Thyroid gland (tissue), 4 donors: ENCODE measurements at regions of chr13 and their contacts with region 1.

Region 1: DNA sequence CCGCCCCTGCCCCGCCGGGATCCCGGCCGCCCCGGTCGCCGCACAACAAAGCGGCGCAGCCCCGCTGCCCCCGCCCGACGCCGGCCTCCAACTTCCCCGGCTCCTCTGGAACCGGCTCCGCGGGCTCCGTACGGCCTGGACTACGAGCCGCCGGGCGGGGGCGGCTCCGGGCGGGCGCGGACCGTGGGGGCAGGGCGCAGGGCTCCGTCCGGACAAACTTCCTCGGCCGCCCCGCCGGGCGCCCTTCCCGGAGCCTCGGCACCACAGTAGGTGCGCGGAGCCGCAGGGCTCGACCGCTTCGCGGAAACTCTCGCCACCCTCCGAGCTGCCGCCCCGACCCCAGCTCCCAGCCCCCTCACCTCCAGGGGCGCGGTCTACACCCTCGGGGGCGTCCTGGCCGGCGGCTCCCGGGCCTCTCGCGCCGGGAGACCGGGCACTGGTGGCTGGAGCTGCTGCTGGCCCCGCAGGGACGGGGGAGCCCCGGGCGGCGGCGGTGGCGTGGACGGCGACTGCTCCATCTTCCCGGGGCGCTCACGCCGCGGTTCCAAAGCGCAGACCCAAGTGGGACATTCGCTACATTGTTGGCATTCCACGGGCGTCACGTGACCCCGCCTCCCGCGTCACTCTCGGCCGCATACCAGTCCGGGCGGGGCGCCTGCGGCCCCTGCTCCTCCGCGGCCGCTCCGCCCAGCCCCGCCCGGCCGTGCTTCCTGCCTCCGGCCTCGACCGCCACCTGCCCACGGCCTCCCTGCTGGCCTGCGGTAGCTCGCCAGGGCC is at the start of gene LATS2:
- DNase-seq: peak; percentile 97 to 98
- H3K4me3 ChIP-seq: peak within 1 kb of the TSS; percentile 75 to 98 (median 93)
- H3K27ac ChIP-seq: peak within 1 kb of the TSS; percentile 100
- H3K4me1 ChIP-seq: peaks cover 31 to 37% of the 10 kb centered on the region in 2 donors
- H3K27me3 ChIP-seq: no peaks in the 10 kb centered on the region
- CTCF ChIP-seq: peak in 3 of 6 experiments; percentile 41 to 65 (median 43)
- POLR2A ChIP-seq: peak; percentile 89 to 98
- total RNA-seq, gene LATS2: 33.0 to 69.6 (median 37.5) TPM

Region 2: DNA sequence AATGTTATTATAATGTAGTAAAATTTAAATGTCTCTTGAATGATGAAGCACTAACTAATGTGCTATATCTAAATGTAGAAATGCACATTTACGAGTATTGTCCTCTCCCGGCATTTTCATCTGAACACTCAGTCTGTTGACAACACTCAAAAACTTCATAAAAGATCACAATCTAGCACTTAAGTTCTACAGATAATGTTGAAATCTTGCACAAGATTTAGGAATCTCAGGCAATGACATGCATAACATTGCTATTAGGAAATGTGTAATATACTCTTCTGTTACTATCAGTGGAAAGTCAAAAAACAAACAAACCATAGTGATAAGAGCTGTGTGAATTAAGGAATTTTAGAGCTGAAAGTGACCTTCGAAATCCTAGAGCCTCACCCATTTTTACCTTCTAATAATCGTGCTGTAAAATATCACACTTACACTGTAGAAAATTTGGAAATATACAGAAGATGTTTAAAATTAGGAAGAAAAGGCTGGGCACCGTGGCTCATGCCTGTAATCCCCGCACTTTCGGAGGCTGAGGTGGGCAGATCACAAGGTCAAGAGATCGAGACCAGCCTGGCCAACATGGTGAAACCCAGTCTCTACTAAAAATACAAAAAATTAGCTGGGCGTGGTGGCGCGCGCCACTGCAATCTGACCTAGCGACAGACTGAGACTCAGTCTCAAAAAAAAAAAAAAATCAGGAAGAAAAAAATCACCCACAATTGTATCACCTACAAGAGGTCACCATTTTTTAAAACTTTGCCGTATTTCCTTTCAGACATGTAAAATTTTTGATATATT is 120.9 kb before region 1 on chr13:
- intact Hi-C with region 1: loop called (anchors 5 kb)
- DNase-seq: no peak
- H3K4me3 ChIP-seq: no peak overlapping the region
- H3K27ac ChIP-seq: no peak overlapping the region
- H3K4me1 ChIP-seq: peaks cover 0 to 5% of the 10 kb centered on the region in 2 donors
- H3K27me3 ChIP-seq: no peaks in the 10 kb centered on the region
- CTCF ChIP-seq: no peak
- POLR2A ChIP-seq: no peak

Region 3: DNA sequence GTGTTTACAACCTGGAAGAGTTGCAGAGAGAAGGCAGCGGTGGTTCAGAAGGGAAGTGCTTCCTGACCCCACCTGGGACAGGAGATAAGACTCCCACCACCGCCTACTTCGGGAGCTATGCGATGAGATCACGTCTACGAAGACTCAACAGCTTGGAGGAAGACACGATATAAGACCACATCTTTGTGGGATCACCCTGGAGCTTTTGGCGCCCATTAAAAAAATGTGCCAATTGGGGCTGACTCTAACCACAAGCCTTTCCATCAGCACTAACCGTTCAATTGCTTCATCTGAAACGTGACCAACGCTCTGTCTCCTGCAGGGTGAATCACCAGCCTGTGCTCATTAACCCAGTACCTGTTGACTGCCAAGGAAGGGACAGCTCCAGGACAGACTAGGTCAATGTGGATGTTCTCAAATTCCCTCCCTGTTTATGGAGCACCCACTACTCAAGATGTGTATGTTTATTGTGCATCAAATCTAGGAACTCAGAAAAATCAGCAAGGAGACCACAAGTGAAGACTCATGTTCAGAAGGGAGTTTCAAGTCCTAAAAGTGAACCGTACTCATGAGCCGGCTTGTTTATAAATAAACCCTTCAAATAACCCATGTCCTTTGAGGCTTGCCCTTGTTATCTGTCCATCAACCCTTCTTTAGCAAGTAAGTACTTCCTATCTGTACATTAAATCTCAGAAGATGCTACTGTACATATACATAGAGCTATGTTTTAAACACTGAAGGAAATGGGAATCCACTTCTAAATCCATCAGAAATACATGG is 67.3 kb before region 1 on chr13:
- intact Hi-C with region 1: no loop called
- DNase-seq: no peak
- H3K4me3 ChIP-seq: no peak overlapping the region
- H3K27ac ChIP-seq: no peak overlapping the region
- H3K4me1 ChIP-seq: peaks cover 8 to 28% of the 10 kb centered on the region in 2 donors
- H3K27me3 ChIP-seq: no peaks in the 10 kb centered on the region
- CTCF ChIP-seq: no peak
- POLR2A ChIP-seq: no peak

Region 4: GRCh38 chr13:21511849-21512248 is 450.7 kb after region 1 on chr13:
- intact Hi-C with region 1: no loop called
- DNase-seq: no peak
- H3K4me3 ChIP-seq: no peak overlapping the region
- H3K27ac ChIP-seq: no peak overlapping the region
- H3K4me1 ChIP-seq: no peaks in the 10 kb centered on the region
- H3K27me3 ChIP-seq: no peaks in the 10 kb centered on the region
- CTCF ChIP-seq: no peak
- POLR2A ChIP-seq: no peak